Pancreas (tissue), 10 donors: ENCODE measurements at regions of chr15 and their contacts with region 1.

Region 1: DNA sequence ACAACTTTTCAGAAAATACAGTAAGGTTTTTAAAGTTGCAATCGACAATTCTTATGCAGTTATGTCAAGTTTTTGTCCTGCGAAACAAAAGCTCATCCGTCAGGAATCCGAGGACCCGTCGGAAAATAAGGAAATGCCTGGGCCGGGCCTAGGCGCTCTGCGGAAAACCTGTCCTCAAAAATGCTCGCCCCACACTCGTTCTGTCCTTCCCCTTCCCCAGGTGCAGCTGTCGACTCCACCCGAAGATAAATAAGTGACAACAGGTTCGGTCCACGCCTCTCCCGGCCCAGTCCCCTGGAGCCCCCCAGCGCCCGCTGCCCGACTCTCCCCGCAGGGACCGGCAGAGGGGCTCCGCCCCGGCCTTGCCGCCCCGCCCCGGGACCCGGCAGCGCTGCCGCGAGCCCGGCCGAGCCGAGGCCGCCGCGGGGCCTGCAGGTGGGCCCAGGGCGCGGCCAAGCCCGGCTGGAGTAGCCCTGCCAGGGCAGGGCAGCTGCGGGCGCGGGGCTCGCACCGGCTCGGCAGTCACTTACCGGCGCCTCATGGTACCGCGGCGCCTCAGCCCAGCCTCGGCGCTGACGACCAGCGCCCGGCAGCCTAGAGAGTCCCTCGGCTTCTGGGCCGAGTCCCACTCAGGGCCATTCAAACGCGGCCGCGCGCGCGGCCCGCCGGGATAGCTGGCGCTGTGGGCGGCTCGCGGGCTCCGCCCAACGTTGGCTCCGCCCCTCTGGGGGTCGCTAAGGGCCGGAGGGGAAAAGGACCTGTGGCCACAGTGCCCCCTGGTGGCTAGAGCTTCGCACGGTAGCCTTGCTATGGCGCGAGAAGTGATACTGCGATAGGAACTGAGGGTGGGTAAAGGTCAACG is at the start of gene KATNBL1:
- DNase-seq: peak; percentile 96 to 100 (median 98)
- ATAC-seq: peak; percentile 98 to 99 (median 99)
- H3K4me3 ChIP-seq: peak within 1 kb of the TSS; percentile 35 to 66 (median 56)
- H3K27ac ChIP-seq: peak within 1 kb of the TSS; percentile 55 to 78 (median 68)
- H3K4me1 ChIP-seq: peaks cover 8 to 13% (median 11%) of the 10 kb centered on the region in 3 donors
- H3K27me3 ChIP-seq: no peaks in the 10 kb centered on the region
- CTCF ChIP-seq: peak; percentile 92 to 96 (median 94)
- total RNA-seq, gene KATNBL1: 9.4 to 24.0 (median 11.4) TPM

Region 2: GRCh38 chr15:34064438-34064837 is 145.2 kb before region 1 on chr15:
- intact Hi-C with region 1: loop called in 1 of 3 experiments (anchors 5 kb)
- DNase-seq: no peak
- ATAC-seq: no peak
- H3K4me3 ChIP-seq: no peak overlapping the region
- H3K27ac ChIP-seq: no peak overlapping the region
- H3K4me1 ChIP-seq: no peaks in the 10 kb centered on the region
- H3K27me3 ChIP-seq: no peaks in the 10 kb centered on the region
- CTCF ChIP-seq: no peak

Region 3: GRCh38 chr15:34101366-34102175 is 108.1 kb before region 1 on chr15 and contains the starts of genes EMC7 and PGBD4:
- intact Hi-C with region 1: loop called in 1 of 3 experiments (anchors 10 kb)
- DNase-seq: peak; percentile 97 to 100 (median 99)
- ATAC-seq: peak; percentile 98 to 100 (median 99)
- H3K4me3 ChIP-seq: peak within 1 kb of the TSS; percentile 71 to 91 (median 87)
- H3K27ac ChIP-seq: peak within 1 kb of the TSS; percentile 74 to 89 (median 82)
- H3K4me1 ChIP-seq: peaks cover 0 to 21% (median 7%) of the 10 kb centered on the region in 3 donors
- H3K27me3 ChIP-seq: no peaks in the 10 kb centered on the region
- CTCF ChIP-seq: no peak
- total RNA-seq, gene EMC7: 25.8 to 38.3 (median 31.7) TPM
- total RNA-seq, gene PGBD4: 0.37 to 1.1 (median 0.57) TPM

Region 4: DNA sequence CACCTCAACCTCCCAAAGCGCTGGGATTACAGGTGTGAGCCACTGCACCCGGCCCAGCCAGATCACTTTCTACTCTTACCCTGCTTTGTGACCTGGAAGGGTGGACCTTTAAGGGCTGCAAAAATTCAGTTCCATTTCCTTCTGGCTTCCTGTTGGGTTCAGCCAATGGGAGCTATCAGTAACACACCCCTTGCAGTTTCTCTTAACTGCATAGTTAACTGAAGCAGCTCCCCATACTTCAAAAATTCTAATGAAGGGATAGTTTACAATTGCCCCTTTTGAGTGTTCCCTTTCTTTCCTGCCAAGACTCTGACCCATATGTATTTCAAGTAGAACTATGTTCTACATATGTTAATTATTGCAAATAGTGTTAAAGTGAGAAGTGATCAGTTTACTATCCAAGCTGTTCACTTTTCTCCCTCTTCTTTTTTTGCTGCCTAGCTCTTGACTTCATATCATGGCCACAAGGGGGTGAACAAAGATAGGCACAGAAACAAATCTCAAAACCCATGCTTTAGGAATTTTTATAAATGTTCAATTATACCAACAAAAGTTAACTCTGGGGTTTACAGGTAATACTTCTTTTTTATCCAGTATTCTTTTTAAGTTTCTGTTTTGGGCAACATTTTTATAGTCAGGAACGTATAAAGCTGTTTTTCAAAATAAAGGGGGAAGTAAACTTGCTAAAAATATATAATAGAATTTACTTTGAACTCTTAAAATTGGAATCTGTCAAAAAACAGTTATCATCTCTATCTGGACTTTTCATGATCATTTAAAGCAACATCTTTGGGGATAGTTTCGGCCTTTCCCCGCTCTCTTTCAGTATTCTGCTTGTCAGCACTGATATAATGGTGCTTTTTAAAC is 99.6 kb before region 1 on chr15:
- intact Hi-C with region 1: loop called in 2 of 3 experiments (anchors 10 kb)
- DNase-seq: no peak
- ATAC-seq: peak; percentile 46 to 69 (median 62)
- H3K4me3 ChIP-seq: no peak overlapping the region
- H3K27ac ChIP-seq: no peak overlapping the region
- H3K4me1 ChIP-seq: no peaks in the 10 kb centered on the region
- H3K27me3 ChIP-seq: no peaks in the 10 kb centered on the region
- CTCF ChIP-seq: peak in 2 of 4 donors; percentile 36 to 46